PC-3 (cell line): ENCODE measurements at regions of chr6 and their contacts with region 1.

Region 1: DNA sequence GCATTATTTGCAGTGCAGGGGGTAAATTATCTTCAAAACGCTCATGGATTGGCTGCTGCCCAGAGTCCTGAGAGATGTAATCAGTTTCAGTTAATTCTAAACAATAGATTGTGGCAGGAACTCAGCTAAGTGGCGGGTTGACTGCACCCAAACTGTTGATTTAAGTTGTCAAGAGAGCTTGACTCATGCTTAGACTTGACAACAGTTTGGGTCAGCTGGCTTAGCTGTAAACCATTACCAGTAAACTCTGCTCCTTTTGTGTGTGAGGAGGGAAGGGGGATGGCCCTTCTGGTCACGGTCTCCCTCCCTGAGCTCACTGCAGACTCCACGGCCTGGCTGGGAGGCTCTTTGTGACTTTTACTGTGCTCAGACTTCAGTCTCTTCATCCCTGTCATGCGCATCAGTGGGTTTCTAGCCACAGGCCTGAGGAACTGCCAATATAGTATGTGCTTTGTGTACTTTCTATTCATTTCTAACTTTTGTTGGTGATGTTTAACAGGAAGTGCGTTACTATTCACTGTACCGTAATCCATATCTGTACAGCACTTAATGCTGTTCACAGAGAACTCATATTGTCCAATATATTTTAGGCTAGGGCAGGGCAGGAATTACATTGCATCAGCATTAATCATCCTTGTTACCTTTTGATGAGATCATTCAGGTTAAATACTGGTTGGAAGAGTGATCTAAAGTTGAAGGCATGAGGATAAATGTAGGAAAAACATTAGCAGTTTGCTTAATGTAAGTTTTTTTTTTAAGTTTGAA is 488.3 kb downstream of the CDKAL1 start:
- DNase-seq: peak; percentile 97
- ATAC-seq: peak; percentile 82
- H3K4me3 ChIP-seq: peak overlapping the region; percentile 44
- H3K27ac ChIP-seq: peak overlapping the region; percentile 94
- H3K4me1 ChIP-seq: peaks cover 63% of the 10 kb centered on the region
- H3K27me3 ChIP-seq: no peaks in the 10 kb centered on the region
- CTCF ChIP-seq: no peak

Region 2: DNA sequence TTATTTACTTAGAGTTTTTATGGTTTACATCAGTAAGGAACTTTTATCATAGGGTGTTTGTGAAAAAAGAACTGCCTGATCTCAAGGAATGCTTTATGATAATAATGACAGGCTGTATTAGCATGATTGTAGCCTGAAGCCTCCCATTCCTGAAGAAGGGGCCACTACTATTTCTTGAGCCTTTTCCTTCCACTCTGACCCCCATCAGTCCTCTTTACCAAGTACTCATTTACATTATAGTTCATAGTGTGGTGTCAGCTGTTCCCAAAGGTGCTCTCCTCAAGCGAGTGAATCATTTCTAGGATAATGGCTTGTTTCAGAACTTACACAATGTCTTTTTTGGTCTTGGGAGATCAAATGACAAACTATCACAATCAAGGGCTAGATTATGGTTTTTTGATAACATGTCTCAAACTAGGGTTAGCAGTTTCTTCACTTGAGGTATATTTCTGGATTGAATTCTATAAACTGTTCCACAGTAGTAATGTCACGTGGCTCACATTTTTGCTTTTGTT is 204.7 kb before region 1 on chr6:
- CTCF ChIA-PET with region 1: no interaction called
- POLR2A ChIA-PET with region 1: no interaction called
- intact Hi-C with region 1: no loop called
- DNase-seq: no peak
- ATAC-seq: no peak
- H3K4me3 ChIP-seq: no peak overlapping the region
- H3K27ac ChIP-seq: no peak overlapping the region
- H3K4me1 ChIP-seq: no peaks in the 10 kb centered on the region
- H3K27me3 ChIP-seq: no peaks in the 10 kb centered on the region
- CTCF ChIP-seq: no peak

Region 3: GRCh38 chr6:20866935-20867703 is 155.4 kb before region 1 on chr6:
- CTCF ChIA-PET with region 1: no interaction called
- POLR2A ChIA-PET with region 1: no interaction called
- intact Hi-C with region 1: no loop called
- DNase-seq: peak; percentile 66
- ATAC-seq: peak; percentile 92
- H3K4me3 ChIP-seq: no peak overlapping the region
- H3K27ac ChIP-seq: peak overlapping the region; percentile 51
- H3K4me1 ChIP-seq: peaks cover 13% of the 10 kb centered on the region
- H3K27me3 ChIP-seq: no peaks in the 10 kb centered on the region
- CTCF ChIP-seq: no peak

Region 4: DNA sequence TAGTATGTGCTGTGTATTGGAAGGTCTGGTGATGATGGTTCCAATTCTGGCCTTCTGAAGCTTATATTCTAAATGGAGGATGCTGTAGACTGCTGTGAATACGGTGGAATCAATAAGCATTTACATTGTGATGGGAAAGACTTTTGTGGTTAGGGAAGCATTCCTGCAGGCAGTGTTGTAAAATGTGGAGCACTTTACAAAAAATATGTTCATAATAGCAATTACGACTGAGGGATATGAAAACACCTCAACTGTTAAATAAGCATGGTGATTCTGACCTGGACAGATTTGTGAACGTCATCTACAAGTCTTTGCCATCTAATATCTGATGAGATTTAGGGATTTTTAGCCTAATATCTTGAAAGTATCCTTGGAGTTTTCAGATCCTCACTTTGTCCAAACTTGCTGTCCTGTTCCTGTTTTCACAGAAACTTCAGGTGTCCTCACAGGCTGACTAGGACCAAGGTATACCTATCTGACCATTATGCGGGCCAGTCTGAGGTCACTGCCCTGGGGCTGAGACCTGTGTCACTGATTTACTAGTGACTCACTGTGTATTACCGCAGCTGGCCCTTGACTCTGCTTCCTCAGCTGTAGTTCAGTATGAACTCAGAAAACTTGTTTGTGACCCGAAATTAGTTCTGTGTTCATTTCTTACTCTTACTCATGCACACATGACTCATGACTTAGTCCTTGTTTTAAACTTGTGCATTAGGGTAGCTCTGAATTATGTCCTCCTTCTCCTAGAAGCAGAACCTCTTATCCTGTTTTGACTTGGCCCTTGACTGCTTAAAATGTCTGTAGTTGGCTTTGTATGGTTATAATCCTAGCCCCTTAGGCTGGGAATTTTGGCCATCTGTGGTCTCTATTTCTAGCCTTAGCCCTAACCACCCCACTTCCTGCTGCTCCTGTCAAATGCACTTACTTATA is 145.3 kb before region 1 on chr6:
- CTCF ChIA-PET with region 1: interaction called, 3 read pairs
- POLR2A ChIA-PET with region 1: no interaction called
- intact Hi-C with region 1: loop called (anchors 1 kb)
- DNase-seq: peak; percentile 98
- ATAC-seq: peak; percentile 96
- H3K4me3 ChIP-seq: peak overlapping the region; percentile 8; the same call in 1 of the 2 replicates
- H3K27ac ChIP-seq: peak overlapping the region; percentile 88
- H3K4me1 ChIP-seq: peaks cover 45% of the 10 kb centered on the region
- H3K27me3 ChIP-seq: no peaks in the 10 kb centered on the region
- CTCF ChIP-seq: no peak

Region 5: DNA sequence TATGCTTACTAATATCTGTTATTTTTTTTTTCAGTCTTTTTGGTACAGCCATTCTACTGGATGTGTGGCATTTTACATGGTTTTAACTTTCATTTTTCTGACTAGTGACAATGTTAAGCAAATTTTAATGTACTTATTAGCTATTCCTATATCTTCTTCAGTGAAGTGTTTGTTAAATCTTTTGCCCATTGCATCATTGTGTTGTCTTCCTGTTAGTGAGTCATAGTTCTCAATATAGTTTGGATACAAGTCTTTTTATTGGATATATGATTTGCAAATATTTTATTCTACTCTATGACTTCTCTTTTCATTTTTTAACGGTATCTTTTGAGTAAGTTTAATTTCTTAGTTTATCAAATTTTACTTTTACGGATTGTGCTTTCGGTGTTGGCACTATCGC is 31.1 kb after region 1 on chr6:
- CTCF ChIA-PET with region 1: no interaction called
- POLR2A ChIA-PET with region 1: no interaction called
- intact Hi-C with region 1: loop called (anchors 2 kb)
- DNase-seq: peak; percentile 45
- ATAC-seq: peak; percentile 56
- H3K4me3 ChIP-seq: no peak overlapping the region
- H3K27ac ChIP-seq: peak overlapping the region; percentile 16
- H3K4me1 ChIP-seq: peaks cover 22% of the 10 kb centered on the region
- H3K27me3 ChIP-seq: no peaks in the 10 kb centered on the region
- CTCF ChIP-seq: no peak

Region 6: DNA sequence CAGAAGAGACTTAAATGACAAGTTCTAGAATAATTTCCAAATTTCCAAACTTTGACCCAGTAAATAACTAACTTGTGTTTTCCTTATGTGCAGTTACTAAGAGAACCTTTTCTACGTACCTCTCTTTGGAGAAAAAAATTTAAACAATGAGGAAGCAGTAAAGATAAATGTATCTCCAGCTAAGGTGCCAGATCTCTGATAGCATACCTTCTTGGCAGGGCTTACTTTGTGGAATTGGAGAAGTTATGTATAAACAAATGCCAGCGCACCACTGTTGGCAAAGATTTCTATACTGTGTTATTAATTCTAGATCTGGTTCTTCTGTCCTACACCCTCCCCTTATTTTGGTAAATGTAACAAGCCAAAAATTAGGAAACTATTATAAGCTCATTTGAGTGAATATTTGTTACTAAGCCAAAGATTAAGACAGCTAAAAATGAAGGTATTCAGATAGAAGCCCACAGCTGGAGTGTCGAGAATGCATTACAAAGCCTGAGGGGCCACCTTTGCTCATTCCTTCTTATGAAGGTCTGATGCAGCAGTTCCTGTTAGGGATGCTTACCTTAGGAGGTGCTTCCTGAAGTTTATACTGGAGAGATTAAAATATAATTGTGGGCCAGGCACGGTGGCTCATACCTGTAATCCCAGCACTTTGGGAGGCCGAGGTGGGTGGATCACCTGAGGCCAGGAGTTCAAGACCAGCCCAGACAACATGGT is 197.9 kb after region 1 on chr6:
- CTCF ChIA-PET with region 1: no interaction called
- POLR2A ChIA-PET with region 1: no interaction called
- intact Hi-C with region 1: loop called (anchors 1 kb)
- DNase-seq: peak; percentile 75
- ATAC-seq: peak; percentile 73
- H3K4me3 ChIP-seq: no peak overlapping the region
- H3K27ac ChIP-seq: no peak overlapping the region
- H3K4me1 ChIP-seq: peaks cover 13% of the 10 kb centered on the region
- H3K27me3 ChIP-seq: no peaks in the 10 kb centered on the region
- CTCF ChIP-seq: no peak

Region 7: DNA sequence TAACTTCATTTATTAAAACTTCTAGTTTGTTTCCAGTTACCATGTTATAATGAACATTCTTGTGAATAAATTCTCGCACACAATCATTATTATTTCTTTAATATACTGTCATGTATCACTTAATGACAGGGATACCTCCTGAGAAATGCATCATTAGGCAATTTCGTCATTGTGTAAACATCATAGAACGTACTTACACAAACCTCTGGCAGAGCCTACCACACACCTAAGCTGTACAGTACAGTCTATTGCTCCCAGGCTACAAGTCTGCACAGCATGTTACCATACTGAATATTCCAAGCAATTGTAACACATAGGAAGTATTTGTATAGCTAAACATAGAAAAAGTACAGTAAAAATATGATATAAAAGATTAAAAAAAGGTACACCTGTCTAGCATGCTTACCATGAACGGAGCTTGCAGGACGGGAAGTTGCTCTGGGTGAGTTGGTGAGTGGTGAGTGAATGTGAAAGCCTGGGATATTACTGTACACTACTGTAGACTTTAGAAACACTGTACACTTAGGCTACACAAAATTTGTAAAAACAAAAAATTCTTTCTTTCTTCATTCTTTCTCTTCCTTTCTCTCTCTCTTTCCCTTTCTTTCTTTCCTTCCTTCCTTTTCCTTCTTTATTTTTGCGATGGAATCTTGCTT is 302.8 kb after region 1 on chr6:
- CTCF ChIA-PET with region 1: no interaction called
- POLR2A ChIA-PET with region 1: no interaction called
- intact Hi-C with region 1: loop called (anchors 10 kb)
- DNase-seq: peak; percentile 59
- ATAC-seq: peak; percentile 89
- H3K4me3 ChIP-seq: no peak overlapping the region
- H3K27ac ChIP-seq: no peak overlapping the region
- H3K4me1 ChIP-seq: peaks cover 9% of the 10 kb centered on the region; the same call in 1 of the 2 replicates
- H3K27me3 ChIP-seq: no peaks in the 10 kb centered on the region
- CTCF ChIP-seq: no peak